ENCODE measurements at regions of chr12 and their contacts with region 1.

Region 1: DNA sequence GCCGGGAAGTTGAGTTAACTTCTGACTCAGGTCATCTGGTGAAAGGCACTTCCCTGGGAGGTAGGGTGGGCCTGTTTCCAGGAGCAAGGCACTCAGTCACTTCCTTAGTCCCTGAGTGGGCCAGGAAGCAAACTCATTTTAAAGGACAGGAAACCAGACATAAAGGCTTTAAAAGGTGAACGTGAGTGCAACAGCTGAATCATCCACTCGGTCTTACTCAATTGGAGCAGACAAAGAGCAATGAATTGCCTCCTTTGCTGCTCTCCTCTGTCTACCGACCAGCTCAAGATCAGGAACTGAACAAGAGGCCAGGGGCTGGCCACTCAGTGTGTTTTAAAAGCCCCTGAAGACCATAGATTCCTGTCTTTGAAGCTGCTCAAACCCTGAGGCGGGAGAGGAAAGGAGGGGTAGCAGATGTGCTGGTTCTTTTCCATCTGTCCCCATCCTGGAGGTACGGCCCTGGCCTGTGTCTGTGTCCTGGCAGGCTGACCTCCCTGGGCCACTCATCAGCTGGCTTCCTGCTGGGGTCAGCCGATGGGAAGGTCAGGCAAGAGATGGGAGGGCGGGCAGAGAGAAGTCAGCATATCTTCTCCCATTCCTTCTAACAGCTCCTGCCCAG is 148.9 kb downstream of the PPM1H start:
- DNase-seq: peak in 4 of 5 donors; percentile 53 to 76 (median 73)
- ATAC-seq: peak; percentile 78 to 92 (median 86)
- H3K4me3 ChIP-seq: no peak overlapping the region
- H3K27ac ChIP-seq: peak overlapping the region; percentile 58 to 89 (median 78)
- H3K4me1 ChIP-seq: peaks cover 0 to 69% (median 23%) of the 10 kb centered on the region in 12 donors
- H3K27me3 ChIP-seq: no peaks in the 10 kb centered on the region
- CTCF ChIP-seq: no peak
- POLR2A ChIP-seq: no peak

Region 2: GRCh38 chr12:62703011-62703380 is 83.1 kb before region 1 on chr12:
- intact Hi-C with region 1: loop called in 3 of 10 experiments (anchors 5 kb)
- DNase-seq: no peak
- ATAC-seq: peak in 2 of 4 donors; percentile 13 to 55
- H3K4me3 ChIP-seq: no peak overlapping the region
- H3K27ac ChIP-seq: peak overlapping the region in 11 of 12 donors; percentile 39 to 87 (median 66)
- H3K4me1 ChIP-seq: peaks cover 5 to 48% (median 27%) of the 10 kb centered on the region in 12 donors
- H3K27me3 ChIP-seq: no peaks in the 10 kb centered on the region
- CTCF ChIP-seq: no peak
- POLR2A ChIP-seq: no peak

Region 3: DNA sequence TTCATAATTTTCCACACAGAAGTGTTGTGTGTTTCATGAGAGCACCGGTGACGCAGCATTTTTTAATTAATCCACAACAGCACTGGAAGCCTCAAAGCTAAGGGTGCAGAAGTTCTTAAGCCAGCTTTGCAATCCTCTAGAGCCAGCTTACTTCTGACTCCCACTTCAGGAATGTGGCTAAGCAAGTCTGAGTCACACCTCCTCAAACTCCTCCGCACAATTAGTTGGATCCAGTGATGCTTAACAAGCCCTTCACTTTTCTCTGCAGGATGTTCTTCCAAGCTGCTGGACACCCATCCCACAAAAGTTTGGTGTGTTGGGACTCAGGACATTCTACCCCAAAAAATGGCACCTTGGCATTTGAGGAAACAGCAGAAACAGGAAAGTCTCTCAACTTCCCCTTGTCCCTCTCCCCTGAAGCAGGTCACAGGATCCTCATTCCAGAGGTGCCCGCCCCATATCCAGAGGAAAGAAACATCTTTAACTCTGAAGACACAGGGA is 61.1 kb before region 1 on chr12:
- intact Hi-C with region 1: loop called in 2 of 10 experiments (anchors 5 to 10 kb)
- DNase-seq: peak in 1 of 5 donors; percentile 37
- ATAC-seq: peak in 3 of 4 donors; percentile 68 to 90 (median 82)
- H3K4me3 ChIP-seq: no peak overlapping the region
- H3K27ac ChIP-seq: peak overlapping the region in 2 of 12 donors; percentile 19 to 56
- H3K4me1 ChIP-seq: peaks cover 0 to 45% (median 13%) of the 10 kb centered on the region in 12 donors
- H3K27me3 ChIP-seq: no peaks in the 10 kb centered on the region
- CTCF ChIP-seq: no peak
- POLR2A ChIP-seq: no peak

Region 4: GRCh38 chr12:62731055-62731820 is 54.8 kb before region 1 on chr12:
- intact Hi-C with region 1: loop called in 2 of 10 experiments (anchors 5 to 10 kb)
- DNase-seq: no peak
- ATAC-seq: peak in 3 of 4 donors; percentile 19 to 69 (median 38)
- H3K4me3 ChIP-seq: peak overlapping the region in 3 of 12 donors; percentile 5 to 21 (median 16)
- H3K27ac ChIP-seq: peak overlapping the region in 7 of 12 donors; percentile 2 to 70 (median 20)
- H3K4me1 ChIP-seq: peaks cover 0 to 67% (median 14%) of the 10 kb centered on the region in 12 donors
- H3K27me3 ChIP-seq: no peaks in the 10 kb centered on the region
- CTCF ChIP-seq: no peak
- POLR2A ChIP-seq: no peak

Region 5: GRCh38 chr12:62738616-62739015 is 47.4 kb before region 1 on chr12:
- intact Hi-C with region 1: loop called in 2 of 10 experiments (anchors 5 to 10 kb)
- DNase-seq: no peak
- ATAC-seq: no peak
- H3K4me3 ChIP-seq: no peak overlapping the region
- H3K27ac ChIP-seq: no peak overlapping the region
- H3K4me1 ChIP-seq: peaks cover 0 to 21% (median 2%) of the 10 kb centered on the region in 12 donors
- H3K27me3 ChIP-seq: no peaks in the 10 kb centered on the region
- CTCF ChIP-seq: no peak
- POLR2A ChIP-seq: no peak

Region 6: DNA sequence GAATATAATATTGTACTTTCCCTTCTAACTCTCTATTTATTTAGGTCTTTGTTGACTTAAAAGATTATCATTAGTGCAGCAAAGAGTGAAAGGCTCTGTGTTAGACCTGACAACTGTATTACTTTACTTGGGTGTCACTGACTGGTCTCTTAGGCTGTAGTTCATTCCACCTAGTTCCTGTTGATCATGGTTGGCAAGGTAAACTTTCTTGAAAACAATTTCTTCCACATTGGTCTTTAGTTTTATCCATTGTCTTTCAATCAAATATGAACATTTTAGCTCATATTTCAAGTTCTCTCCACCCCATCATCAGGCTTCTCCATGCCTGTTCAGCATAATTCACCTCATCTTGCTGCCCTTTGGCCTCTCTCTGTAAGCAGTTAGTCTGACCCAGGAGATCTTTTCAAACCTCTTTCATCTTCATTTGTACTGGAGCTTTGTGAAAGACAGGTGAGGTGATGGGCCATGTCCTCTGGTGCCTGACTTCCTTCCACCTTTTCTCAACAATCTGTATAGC is 181.0 kb after region 1 on chr12:
- intact Hi-C with region 1: no loop called
- DNase-seq: no peak
- ATAC-seq: no peak
- H3K4me3 ChIP-seq: no peak overlapping the region
- H3K27ac ChIP-seq: no peak overlapping the region
- H3K4me1 ChIP-seq: no peaks in the 10 kb centered on the region
- H3K27me3 ChIP-seq: no peaks in the 10 kb centered on the region
- CTCF ChIP-seq: no peak
- POLR2A ChIP-seq: no peak

Region 7: DNA sequence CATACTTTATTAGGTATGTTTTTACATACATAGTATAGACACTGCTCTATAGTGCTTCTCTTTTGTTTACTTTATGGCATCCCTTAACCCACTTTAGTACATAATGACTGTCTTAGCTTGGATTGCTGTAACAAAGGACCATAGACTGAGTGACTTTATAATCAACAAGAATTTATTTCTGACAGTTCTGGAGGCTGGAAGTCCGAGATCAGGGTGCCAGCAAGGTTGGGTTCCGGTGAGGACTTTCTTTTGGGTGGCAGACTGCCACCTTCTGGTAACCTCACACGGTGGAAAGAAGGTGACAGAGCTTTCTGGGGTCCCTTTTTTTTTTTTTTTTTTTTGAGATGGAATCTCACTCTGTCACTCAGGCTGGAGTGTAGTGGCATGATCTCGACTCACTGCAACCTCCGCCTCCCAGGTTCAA is 197.6 kb after region 1 on chr12:
- intact Hi-C with region 1: no loop called
- DNase-seq: no peak
- ATAC-seq: no peak
- H3K4me3 ChIP-seq: no peak overlapping the region
- H3K27ac ChIP-seq: no peak overlapping the region
- H3K4me1 ChIP-seq: no peaks in the 10 kb centered on the region
- H3K27me3 ChIP-seq: no peaks in the 10 kb centered on the region
- CTCF ChIP-seq: peak in 7 of 12 donors; percentile 13 to 45 (median 20)
- POLR2A ChIP-seq: no peak

Measured in heart left ventricle (tissue), 16 donors.